ENCODE measurements at regions of chr6 and their contacts with region 1.

Region 1: DNA sequence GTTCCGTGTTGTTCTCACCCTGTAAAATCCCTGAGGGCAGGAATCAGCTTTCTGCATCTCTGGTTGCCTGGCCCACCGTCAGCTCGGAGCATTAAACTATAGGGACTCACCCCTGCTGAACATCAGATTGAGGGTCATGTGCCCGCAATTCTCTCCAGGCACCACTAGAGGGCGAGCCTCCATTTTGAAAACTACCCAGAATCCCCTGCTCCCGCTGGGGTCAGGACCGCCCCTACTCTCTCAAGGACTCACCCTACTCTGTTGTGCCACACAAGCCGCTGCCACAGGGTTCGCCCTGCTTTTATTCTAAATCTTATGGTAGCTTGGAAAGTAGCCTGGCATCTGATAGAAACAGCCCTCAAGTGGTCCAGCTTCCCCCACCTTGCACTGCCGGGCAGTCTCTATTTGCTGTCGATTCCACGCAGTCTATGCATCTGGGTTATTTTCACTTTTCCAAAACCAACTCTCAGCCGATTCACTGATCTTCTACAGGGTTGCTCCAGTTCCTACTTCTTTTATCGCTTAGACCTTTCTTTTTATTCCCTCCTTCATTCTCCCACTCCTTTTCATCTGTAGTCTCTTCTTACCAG is 244.1 kb upstream of the QKI start:
- DNase-seq: no peak
- ATAC-seq: no peak
- H3K4me3 ChIP-seq: no peak overlapping the region
- H3K27ac ChIP-seq: no peak overlapping the region
- H3K4me1 ChIP-seq: no peaks in the 10 kb centered on the region
- H3K27me3 ChIP-seq: no peaks in the 10 kb centered on the region
- CTCF ChIP-seq: peak; percentile 30 to 51 (median 41)
- POLR2A ChIP-seq: no peak

Region 2: GRCh38 chr6:164911873-164912580 is 1741.6 kb after region 1 on chr6:
- in situ Hi-C with region 1: loop called in 1 of 4 experiments (anchors 25 kb)
- intact Hi-C with region 1: no loop called
- DNase-seq: no peak
- ATAC-seq: peak; percentile 50 to 65
- H3K4me3 ChIP-seq: peak overlapping the region; percentile 29 to 54 (median 32)
- H3K27ac ChIP-seq: peak overlapping the region; percentile 1 to 43 (median 36)
- H3K4me1 ChIP-seq: peaks cover 16 to 17% of the 10 kb centered on the region in 2 donors
- H3K27me3 ChIP-seq: no peaks in the 10 kb centered on the region
- CTCF ChIP-seq: no peak
- POLR2A ChIP-seq: no peak

Region 3: GRCh38 chr6:164927288-164928056 is 1757.1 kb after region 1 on chr6:
- in situ Hi-C with region 1: loop called in 2 of 4 experiments (anchors 25 kb)
- intact Hi-C with region 1: no loop called
- DNase-seq: peak; percentile 37 to 61
- ATAC-seq: peak; percentile 88 to 97
- H3K4me3 ChIP-seq: peak overlapping the region; percentile 38 to 69 (median 51)
- H3K27ac ChIP-seq: peak overlapping the region in 3 of 4 donors; percentile 27 to 54 (median 47)
- H3K4me1 ChIP-seq: peaks cover 8 to 21% of the 10 kb centered on the region in 2 donors
- H3K27me3 ChIP-seq: no peaks in the 10 kb centered on the region
- CTCF ChIP-seq: peak; percentile 88 to 99 (median 93)
- POLR2A ChIP-seq: no peak

Measured in gastrocnemius medialis (tissue), 4 donors.